ENCODE measurements at regions of chr13 and their contacts with region 1.

Region 1: DNA sequence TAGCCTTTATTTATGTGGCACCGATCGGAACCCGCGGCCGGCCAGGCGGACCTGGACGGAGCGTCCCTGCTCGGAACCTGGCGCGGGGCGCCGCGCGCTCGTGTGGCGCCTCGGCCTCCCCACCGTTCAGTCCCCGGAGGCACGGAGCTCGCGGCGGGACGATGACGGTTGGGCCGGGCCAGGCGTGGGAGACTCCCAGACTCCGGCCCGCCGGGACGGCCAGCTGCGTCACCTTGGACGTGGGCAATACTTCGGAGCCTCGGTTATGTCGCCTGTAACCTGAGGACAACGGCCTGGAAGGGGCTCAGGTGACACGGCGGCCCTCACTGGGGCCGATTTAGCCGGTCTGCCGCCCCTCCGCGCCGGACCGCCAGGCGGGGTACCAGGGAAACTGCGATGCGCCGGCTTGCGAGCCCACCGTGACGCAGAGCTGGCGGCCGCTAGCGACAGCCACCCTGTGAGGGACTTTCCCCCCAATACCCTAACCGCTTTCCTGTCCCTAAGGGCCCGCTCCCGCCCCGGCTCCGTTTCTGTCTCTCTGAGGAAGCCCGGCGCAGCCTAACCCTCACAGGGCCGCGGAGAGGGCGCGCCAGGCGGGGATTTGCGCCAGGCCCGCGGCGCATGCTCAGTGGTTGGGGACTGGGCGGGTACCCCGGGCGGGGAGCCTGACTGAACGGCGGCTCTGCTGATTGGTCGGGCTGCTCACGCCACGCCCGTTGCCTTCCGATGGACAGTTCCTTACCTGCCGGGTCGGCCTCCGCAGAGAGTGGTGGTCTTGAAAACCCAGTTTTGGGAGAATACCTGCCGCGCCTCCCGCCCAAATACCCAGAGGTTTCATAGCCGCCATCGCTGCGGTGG is 109.5 kb upstream of the DOCK9 start:
- DNase-seq: peak; percentile 84 to 96 (median 93)
- ATAC-seq: peak; percentile 74
- H3K4me3 ChIP-seq: peak overlapping the region; percentile 66 to 78
- H3K4me3 Mint-ChIP-seq: peak overlapping the region; percentile 94
- H3K27ac ChIP-seq: peak overlapping the region; percentile 85 to 93
- H3K27ac Mint-ChIP-seq: peak overlapping the region; percentile 99
- H3K4me1 ChIP-seq: peaks cover 43% of the 10 kb centered on the region
- H3K4me1 Mint-ChIP-seq: peaks cover 43% of the 10 kb centered on the region
- H3K27me3 ChIP-seq: no peaks in the 10 kb centered on the region
- H3K27me3 Mint-ChIP-seq: no peaks in the 10 kb centered on the region
- CTCF ChIP-seq: peak; percentile 46

Region 2: GRCh38 chr13:97432917-97433726 is 1654.2 kb before region 1 on chr13:
- CTCF ChIA-PET with region 1: no interaction called
- POLR2A ChIA-PET with region 1: no interaction called
- intact Hi-C with region 1: loop called (anchors 5 to 10 kb)
- DNase-seq: peak; percentile 95 to 99 (median 98)
- ATAC-seq: peak; percentile 70
- H3K4me3 ChIP-seq: peak overlapping the region; percentile 79 to 100
- H3K4me3 Mint-ChIP-seq: peak overlapping the region; percentile 94
- H3K27ac ChIP-seq: peak overlapping the region; percentile 97 to 100
- H3K27ac Mint-ChIP-seq: peak overlapping the region; percentile 100
- H3K4me1 ChIP-seq: peaks cover 12% of the 10 kb centered on the region
- H3K4me1 Mint-ChIP-seq: peaks cover 30% of the 10 kb centered on the region
- H3K27me3 ChIP-seq: no peaks in the 10 kb centered on the region
- H3K27me3 Mint-ChIP-seq: no peaks in the 10 kb centered on the region
- CTCF ChIP-seq: no peak

Region 3: DNA sequence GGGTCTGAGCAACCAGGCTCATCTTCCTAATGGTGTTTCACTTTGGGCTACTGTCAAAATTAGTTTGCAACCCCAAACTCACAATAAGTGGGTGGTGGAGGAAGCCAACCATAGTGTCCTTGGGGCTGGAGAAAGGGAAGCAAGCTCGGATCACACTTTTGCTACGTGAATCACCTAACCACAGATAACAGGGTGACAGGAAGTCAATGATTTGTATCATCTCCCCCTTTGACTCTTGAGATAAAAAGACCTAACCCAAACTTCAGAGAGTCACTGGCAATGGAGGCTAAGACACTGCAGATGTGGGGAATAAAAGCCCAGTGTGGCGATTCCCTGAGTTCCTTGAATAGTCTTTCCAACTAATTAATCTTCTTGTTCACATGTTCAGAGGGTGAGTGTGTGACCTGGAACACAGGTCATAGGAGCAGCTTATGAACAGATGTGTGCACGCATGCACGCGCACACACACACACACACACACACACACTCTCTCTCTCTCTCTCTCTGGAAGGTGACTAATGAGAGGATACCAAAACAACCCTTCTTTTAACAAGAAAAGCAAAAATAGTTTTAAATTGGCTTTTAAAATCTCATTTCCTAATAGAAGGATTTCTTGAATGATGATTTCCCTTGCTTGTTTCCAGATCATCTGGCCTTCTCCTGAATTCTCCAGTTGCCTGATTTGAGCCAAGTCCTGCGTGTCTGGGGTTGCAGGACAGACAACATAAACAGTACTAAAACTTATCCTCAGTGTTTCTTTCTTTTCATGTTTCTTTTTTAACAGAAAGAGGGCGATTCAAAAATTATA is 88.3 kb before region 1 on chr13:
- CTCF ChIA-PET with region 1: no interaction called
- POLR2A ChIA-PET with region 1: no interaction called
- intact Hi-C with region 1: loop called (anchors 2 to 5 kb)
- DNase-seq: peak in 6 of 9 experiments; percentile 12 to 75 (median 32)
- ATAC-seq: peak; percentile 71
- H3K4me3 ChIP-seq: no peak overlapping the region
- H3K4me3 Mint-ChIP-seq: peak overlapping the region; percentile 66
- H3K27ac ChIP-seq: no peak overlapping the region
- H3K27ac Mint-ChIP-seq: peak overlapping the region; percentile 84
- H3K4me1 ChIP-seq: peaks cover 87% of the 10 kb centered on the region
- H3K4me1 Mint-ChIP-seq: peaks cover 96% of the 10 kb centered on the region
- H3K27me3 ChIP-seq: no peaks in the 10 kb centered on the region
- H3K27me3 Mint-ChIP-seq: no peaks in the 10 kb centered on the region
- CTCF ChIP-seq: no peak

Region 4: GRCh38 chr13:99057310-99057975 is 29.9 kb before region 1 on chr13:
- CTCF ChIA-PET with region 1: interaction called, 7 read pairs
- POLR2A ChIA-PET with region 1: interaction called, 11 read pairs
- intact Hi-C with region 1: loop called in 1 of 2 experiments (anchors 2 kb)
- DNase-seq: peak in 1 of 9 experiments; percentile 15
- ATAC-seq: no peak
- H3K4me3 ChIP-seq: no peak overlapping the region
- H3K4me3 Mint-ChIP-seq: no peak overlapping the region
- H3K27ac ChIP-seq: no peak overlapping the region
- H3K27ac Mint-ChIP-seq: peak overlapping the region; percentile 47
- H3K4me1 ChIP-seq: peaks cover 68% of the 10 kb centered on the region
- H3K4me1 Mint-ChIP-seq: peaks cover 86% of the 10 kb centered on the region
- H3K27me3 ChIP-seq: no peaks in the 10 kb centered on the region
- H3K27me3 Mint-ChIP-seq: no peaks in the 10 kb centered on the region
- CTCF ChIP-seq: no peak

Region 5: GRCh38 chr13:99176309-99177276 is 89.3 kb after region 1 on chr13:
- CTCF ChIA-PET with region 1: interaction called, 9 read pairs
- POLR2A ChIA-PET with region 1: no interaction called
- intact Hi-C with region 1: loop called in 1 of 2 experiments (anchors 5 kb)
- DNase-seq: peak; percentile 58 to 87 (median 82)
- ATAC-seq: peak; percentile 93
- H3K4me3 ChIP-seq: peak overlapping the region in 1 of 2 experiments; percentile 25
- H3K4me3 Mint-ChIP-seq: peak overlapping the region; percentile 72
- H3K27ac ChIP-seq: no peak overlapping the region
- H3K27ac Mint-ChIP-seq: peak overlapping the region; percentile 64
- H3K4me1 ChIP-seq: peaks cover 43% of the 10 kb centered on the region
- H3K4me1 Mint-ChIP-seq: peaks cover 45% of the 10 kb centered on the region
- H3K27me3 ChIP-seq: no peaks in the 10 kb centered on the region
- H3K27me3 Mint-ChIP-seq: no peaks in the 10 kb centered on the region
- CTCF ChIP-seq: peak; percentile 80

Region 6: GRCh38 chr13:99374994-99375737 is 287.8 kb after region 1 on chr13:
- CTCF ChIA-PET with region 1: no interaction called
- POLR2A ChIA-PET with region 1: no interaction called
- intact Hi-C with region 1: loop called in 1 of 2 experiments (anchors 5 kb)
- DNase-seq: peak in 8 of 9 experiments; percentile 60 to 91 (median 80)
- ATAC-seq: peak; percentile 89
- H3K4me3 ChIP-seq: peak overlapping the region in 1 of 2 experiments; percentile 18
- H3K4me3 Mint-ChIP-seq: peak overlapping the region; percentile 61
- H3K27ac ChIP-seq: peak overlapping the region; percentile 55 to 85
- H3K27ac Mint-ChIP-seq: peak overlapping the region; percentile 97
- H3K4me1 ChIP-seq: peaks cover 75% of the 10 kb centered on the region
- H3K4me1 Mint-ChIP-seq: peaks cover 92% of the 10 kb centered on the region
- H3K27me3 ChIP-seq: no peaks in the 10 kb centered on the region
- H3K27me3 Mint-ChIP-seq: no peaks in the 10 kb centered on the region
- CTCF ChIP-seq: no peak

Region 7: DNA sequence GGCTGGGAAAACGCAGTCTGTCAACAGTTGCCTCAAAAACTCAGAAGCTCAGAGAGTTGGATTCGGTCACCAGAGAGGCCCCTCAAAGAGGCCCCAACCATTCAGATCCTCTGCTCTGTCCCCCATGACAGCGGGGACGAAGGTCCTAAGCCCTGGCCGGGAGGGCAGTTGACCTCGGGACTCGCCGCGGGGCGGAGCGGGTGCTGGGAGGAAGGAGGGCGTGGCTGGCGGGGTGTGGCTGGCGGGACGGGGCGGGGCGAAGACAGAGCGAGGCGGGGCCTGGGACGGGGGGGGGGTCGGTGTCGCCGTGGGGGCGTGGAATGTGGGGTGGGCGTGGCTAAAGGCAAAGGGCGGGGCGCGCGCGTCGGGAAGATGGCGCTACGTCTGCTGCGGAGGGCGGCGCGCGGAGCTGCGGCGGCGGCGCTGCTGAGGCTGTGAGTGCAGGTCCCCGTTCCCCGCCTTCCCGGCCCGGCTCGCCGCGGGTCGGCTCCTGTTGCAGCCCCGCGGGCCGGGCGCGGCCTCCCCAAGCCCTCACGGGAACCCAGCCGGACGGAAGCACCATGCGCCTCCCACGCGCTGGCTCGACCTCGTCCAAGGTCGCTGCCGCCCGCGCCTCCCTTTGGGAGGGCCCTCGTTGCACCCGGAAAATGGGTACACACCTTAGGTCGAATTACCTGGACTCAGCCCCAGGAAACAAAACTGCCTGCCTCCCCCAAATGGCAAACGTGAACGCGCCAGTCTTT is 519.2 kb after region 1 on chr13:
- CTCF ChIA-PET with region 1: no interaction called
- POLR2A ChIA-PET with region 1: interaction called, 4 read pairs
- intact Hi-C with region 1: loop called in 1 of 2 experiments (anchors 2 kb)
- DNase-seq: peak; percentile 82 to 95 (median 91)
- ATAC-seq: peak; percentile 93
- H3K4me3 ChIP-seq: peak within 1 kb of the TSS; percentile 89 to 93
- H3K4me3 Mint-ChIP-seq: peak within 1 kb of the TSS; percentile 92
- H3K27ac ChIP-seq: peak within 1 kb of the TSS; percentile 72 to 81
- H3K27ac Mint-ChIP-seq: peak within 1 kb of the TSS; percentile 92
- H3K4me1 ChIP-seq: peaks cover 23% of the 10 kb centered on the region
- H3K4me1 Mint-ChIP-seq: peaks cover 45% of the 10 kb centered on the region
- H3K27me3 ChIP-seq: no peaks in the 10 kb centered on the region
- H3K27me3 Mint-ChIP-seq: no peaks in the 10 kb centered on the region
- CTCF ChIP-seq: no peak